ENCODE measurements at regions of chr6 and their contacts with region 1.

Region 1: GRCh38 chr6:168884646-168885086 is 369.0 kb downstream of the THBS2 start:
- DNase-seq: peak; percentile 90
- H3K4me3 ChIP-seq: peak overlapping the region in 7 of 8 donors; percentile 26 to 68 (median 38)
- H3K27ac ChIP-seq: peak overlapping the region in 5 of 8 donors; percentile 3 to 73 (median 47)
- H3K4me1 ChIP-seq: peaks cover 0 to 17% (median 9%) of the 10 kb centered on the region in 6 donors
- H3K27me3 ChIP-seq: peaks cover 0 to 20% (median 0%) of the 10 kb centered on the region in 7 donors
- CTCF ChIP-seq: peak; percentile 59 to 96 (median 87)
- POLR2A ChIP-seq: no peak

Region 2: GRCh38 chr6:168370310-168370991 is 514.2 kb before region 1 on chr6:
- intact Hi-C with region 1: loop called (anchors 5 kb)
- DNase-seq: peak; percentile 78
- H3K4me3 ChIP-seq: no peak overlapping the region
- H3K27ac ChIP-seq: no peak overlapping the region
- H3K4me1 ChIP-seq: peaks cover 0 to 5% (median 0%) of the 10 kb centered on the region in 6 donors
- H3K27me3 ChIP-seq: peaks cover 0 to 38% (median 0%) of the 10 kb centered on the region in 7 donors
- CTCF ChIP-seq: peak; percentile 21 to 78 (median 59)
- POLR2A ChIP-seq: no peak

Region 3: DNA sequence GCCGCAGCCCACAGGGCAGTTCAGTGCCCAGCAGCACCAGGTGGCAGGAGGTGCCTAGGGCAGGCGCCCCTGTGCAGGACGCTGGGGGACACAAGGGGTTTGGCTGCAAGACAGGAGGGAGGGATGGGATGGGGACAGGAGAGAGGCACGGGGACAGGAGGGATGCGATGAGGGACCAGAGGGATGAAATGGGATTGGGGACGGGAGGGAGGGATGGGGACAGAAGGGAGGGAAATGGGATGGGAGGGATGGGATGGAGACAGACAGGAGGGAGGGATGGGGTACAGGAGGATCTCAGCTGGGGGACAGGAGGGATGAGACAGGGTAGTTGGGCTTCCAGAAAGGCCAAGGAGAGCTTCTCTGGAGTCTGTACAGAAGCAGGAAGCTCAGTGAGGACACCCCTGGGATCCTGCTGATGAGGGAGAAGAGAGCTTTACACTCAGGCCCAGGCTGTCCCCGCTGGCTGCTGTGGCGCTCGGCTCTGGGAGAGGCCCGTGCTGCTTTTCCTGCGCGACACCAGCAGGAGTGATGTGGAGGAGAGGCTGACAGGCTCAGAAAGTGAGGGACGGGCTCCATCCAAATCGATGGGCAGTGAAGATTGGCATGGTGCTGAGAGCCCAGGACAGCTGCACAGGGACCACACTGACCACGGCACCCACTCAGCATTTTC is 42.9 kb before region 1 on chr6:
- intact Hi-C with region 1: no loop called
- DNase-seq: no peak
- H3K4me3 ChIP-seq: no peak overlapping the region
- H3K27ac ChIP-seq: no peak overlapping the region
- H3K4me1 ChIP-seq: no peaks in the 10 kb centered on the region
- H3K27me3 ChIP-seq: no peaks in the 10 kb centered on the region
- CTCF ChIP-seq: no peak
- POLR2A ChIP-seq: no peak

Region 4: GRCh38 chr6:169190144-169190584 is 305.5 kb after region 1 on chr6:
- intact Hi-C with region 1: no loop called
- DNase-seq: no peak
- H3K4me3 ChIP-seq: no peak overlapping the region
- H3K27ac ChIP-seq: peak overlapping the region in 6 of 8 donors; percentile 17 to 64 (median 63)
- H3K4me1 ChIP-seq: no peaks in the 10 kb centered on the region
- H3K27me3 ChIP-seq: no peaks in the 10 kb centered on the region
- CTCF ChIP-seq: no peak
- POLR2A ChIP-seq: no peak